ENCODE measurements at regions of chr3 and their contacts with region 1.

Region 1: GRCh38 chr3:194727435-194728128 is 41.9 kb downstream of the FAM43A start:
- DNase-seq: no peak
- ATAC-seq: no peak
- H3K4me3 ChIP-seq: no peak overlapping the region
- H3K27ac ChIP-seq: no peak overlapping the region
- H3K4me1 ChIP-seq: peaks cover 76% of the 10 kb centered on the region
- H3K27me3 ChIP-seq: peaks cover 1 to 19% of the 10 kb centered on the region in 2 experiments; a peak in 4 of 5 replicates
- CTCF ChIP-seq: no peak
- EP300 ChIP-seq: no peak
- POLR2A ChIP-seq: no peak
- RAD21 ChIP-seq: no peak

Region 2: GRCh38 chr3:194749631-194750490 is 22.3 kb after region 1 on chr3:
- CTCF ChIA-PET with region 1: no interaction called
- POLR2A ChIA-PET with region 1: interaction called, 5 read pairs
- in situ Hi-C with region 1: no loop called
- intact Hi-C with region 1: loop called (anchors 1 kb)
- DNase-seq: peak; percentile 90
- ATAC-seq: peak; percentile 89
- H3K4me3 ChIP-seq: peak overlapping the region in 1 of 3 experiments; percentile 33; a peak in 1 of 6 replicates
- H3K27ac ChIP-seq: no peak overlapping the region
- H3K4me1 ChIP-seq: peaks cover 35% of the 10 kb centered on the region
- H3K27me3 ChIP-seq: peaks cover 1 to 20% of the 10 kb centered on the region in 2 experiments; a peak in 3 of 5 replicates
- CTCF ChIP-seq: 0 out of 2 replicates have a peak, but pooled peaks have one; percentile 13
- EP300 ChIP-seq: peak in 1 of 2 experiments; percentile 73; a peak in 2 of 4 replicates
- POLR2A ChIP-seq: no peak
- RAD21 ChIP-seq: no peak